Activated CD4-positive, alpha-beta memory T cell treated with anti-CD3 and anti-CD28 coated beads for 36 hours (primary cell): ENCODE measurements at regions of chr6 and their contacts with region 1.

Region 1: DNA sequence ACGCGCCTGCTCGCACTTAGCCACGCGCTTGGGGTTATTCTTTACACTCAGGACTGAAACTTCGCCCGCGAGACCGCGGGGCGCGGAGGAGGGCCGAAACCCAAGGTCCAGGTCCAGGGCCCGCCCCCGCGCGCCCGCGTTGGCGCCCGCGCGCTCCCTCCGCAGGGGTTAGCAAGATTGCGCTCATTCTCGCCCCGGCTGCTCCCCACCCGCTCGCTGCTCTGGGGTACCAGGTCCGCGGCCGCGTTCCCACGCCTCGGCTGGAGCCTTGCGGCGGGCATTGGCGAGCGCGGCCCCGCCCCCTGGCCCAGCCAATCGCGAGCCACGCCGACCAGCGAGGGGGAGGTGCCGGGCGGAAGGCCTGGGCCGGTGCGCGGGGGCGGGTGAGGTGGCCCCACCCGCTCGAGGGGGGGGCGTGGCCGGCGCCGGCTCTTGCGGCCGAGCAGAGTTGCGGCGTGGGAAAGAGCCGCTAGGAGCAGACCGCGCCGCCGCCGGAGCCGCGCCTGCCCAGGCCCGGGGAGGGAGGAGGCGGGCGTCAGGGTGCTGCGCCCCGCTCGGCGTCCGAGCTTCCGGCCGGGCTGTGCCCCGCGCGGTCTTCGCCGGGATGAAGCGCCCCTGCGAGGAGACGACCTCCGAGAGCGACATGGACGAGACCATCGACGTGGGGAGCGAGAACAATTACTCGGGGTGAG is at the start of gene HEY2:
- DNase-seq: peak; percentile 88
- H3K4me3 Mint-ChIP-seq: peak within 1 kb of the TSS; percentile 79
- H3K27ac Mint-ChIP-seq: no peak within 1 kb of the TSS
- H3K4me1 Mint-ChIP-seq: peaks cover 29% of the 10 kb centered on the region
- H3K27me3 Mint-ChIP-seq: peaks cover 67% of the 10 kb centered on the region
- total RNA-seq, gene HEY2: not detected

Region 2: DNA sequence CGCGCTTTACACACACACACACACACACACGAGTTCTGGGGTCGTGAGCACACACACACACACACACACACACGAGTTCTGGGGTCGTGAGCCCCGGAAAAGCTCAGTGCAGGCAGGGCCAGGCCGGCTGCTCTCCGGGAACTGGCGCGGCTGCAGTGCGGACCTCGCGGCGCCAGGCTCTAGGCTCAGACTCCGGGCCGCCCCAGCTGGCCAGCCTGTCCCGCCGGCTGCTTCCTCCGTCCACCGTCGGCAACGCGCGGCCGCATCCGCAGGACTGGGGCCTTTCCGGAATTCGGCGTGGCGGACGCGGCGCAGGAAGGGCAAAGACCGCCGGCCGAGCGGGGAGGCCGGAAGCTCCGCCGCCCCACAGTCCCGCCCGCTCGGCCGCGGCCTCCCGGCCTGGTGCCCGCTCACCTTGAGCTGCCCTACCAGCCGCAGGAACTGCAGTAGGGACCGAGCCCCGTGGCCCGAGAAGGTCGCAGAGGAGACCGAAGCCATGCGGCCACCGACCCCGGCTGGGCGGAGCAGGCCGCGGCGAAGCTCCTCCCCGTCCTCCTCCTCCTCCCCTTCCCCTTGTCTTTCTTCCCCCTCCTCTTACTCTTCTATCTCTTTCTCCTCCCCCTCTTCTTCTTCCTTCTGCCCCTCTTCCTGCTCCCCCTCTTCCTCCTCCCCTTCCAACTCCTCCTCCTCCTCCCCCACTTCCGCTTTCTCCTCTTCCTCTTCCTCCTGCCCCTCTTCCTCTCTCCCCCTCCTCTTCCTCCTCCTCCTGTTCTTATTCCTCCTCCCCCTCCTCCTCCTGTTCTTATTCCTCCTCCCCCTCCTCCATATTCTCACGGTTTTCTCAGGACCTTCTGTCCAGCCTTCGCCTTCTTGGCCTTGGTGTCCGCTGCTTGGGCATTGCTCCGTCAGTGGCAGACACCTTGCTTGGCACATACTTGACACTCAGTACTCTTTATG is 447.6 kb before region 1 on chr6 and contains the start of gene HDDC2:
- CTCF ChIA-PET with region 1: interaction called, 18 read pairs
- POLR2A ChIA-PET with region 1: no interaction called
- intact Hi-C with region 1: loop called (anchors 1 kb)
- DNase-seq: peak; percentile 57
- H3K4me3 Mint-ChIP-seq: peak within 1 kb of the TSS; percentile 91
- H3K27ac Mint-ChIP-seq: peak within 1 kb of the TSS; percentile 95
- H3K4me1 Mint-ChIP-seq: peaks cover 54% of the 10 kb centered on the region
- H3K27me3 Mint-ChIP-seq: no peaks in the 10 kb centered on the region
- total RNA-seq, gene HDDC2: 88.9 to 92.3 TPM

Region 3: GRCh38 chr6:125512621-125513020 is 236.7 kb before region 1 on chr6:
- CTCF ChIA-PET with region 1: interaction called, 3 read pairs
- POLR2A ChIA-PET with region 1: no interaction called
- intact Hi-C with region 1: loop called (anchors 5 kb)
- DNase-seq: no peak
- H3K4me3 Mint-ChIP-seq: no peak overlapping the region
- H3K27ac Mint-ChIP-seq: no peak overlapping the region
- H3K4me1 Mint-ChIP-seq: no peaks in the 10 kb centered on the region
- H3K27me3 Mint-ChIP-seq: peaks cover 1% of the 10 kb centered on the region

Region 4: GRCh38 chr6:126339796-126340609 is 590.7 kb after region 1 on chr6 and contains the start of gene CENPW:
- CTCF ChIA-PET with region 1: no interaction called
- POLR2A ChIA-PET with region 1: no interaction called
- intact Hi-C with region 1: loop called (anchors 1 kb)
- DNase-seq: peak; percentile 97
- H3K4me3 Mint-ChIP-seq: no peak within 1 kb of the TSS
- H3K27ac Mint-ChIP-seq: peak within 1 kb of the TSS; percentile 3
- H3K4me1 Mint-ChIP-seq: peaks cover 15% of the 10 kb centered on the region
- H3K27me3 Mint-ChIP-seq: no peaks in the 10 kb centered on the region
- total RNA-seq, gene CENPW: 75.1 to 84.7 TPM